ENCODE measurements at regions of chr12 and their contacts with region 1.

Region 1: DNA sequence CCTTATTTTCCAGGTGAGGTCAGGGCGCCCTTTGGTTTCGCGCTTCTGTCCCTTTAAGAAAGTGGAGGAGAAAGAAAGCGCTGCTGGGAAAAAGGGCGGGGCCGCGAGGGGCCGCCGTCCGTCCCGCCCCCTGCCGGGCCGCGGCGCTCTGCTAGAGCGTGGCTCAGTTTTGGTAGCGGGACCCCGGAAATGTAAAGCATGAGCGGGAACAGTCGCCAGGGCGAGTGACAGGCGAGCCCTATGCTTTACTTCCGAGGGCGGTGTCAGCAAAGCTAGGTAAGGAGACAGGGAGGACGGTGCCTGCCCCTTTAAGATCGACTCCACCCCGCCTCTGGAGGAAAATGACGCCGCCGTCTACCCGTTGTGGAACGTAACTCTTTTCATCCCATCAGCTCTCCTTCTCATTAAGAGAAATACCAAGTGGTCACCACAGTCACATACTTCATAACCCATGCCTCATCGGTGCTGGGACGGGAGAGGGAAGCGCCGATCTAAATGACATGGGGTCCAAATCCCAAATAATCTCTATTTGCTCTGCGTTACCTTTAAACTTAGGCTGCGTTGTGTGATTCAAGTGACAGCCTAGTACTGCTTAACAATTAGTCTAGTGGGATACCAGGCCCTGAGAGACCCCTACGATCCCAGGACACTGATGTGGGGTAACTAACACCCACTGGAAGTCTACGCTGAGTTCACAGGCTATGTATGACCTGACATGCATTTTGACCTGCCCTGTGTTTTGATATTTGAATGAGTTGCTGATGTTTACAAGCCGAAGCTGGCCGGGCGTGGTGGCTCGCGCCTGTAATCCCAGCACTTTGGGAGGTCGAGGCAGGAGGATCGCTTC is at the start of gene ETFBKMT:
- ATAC-seq: peak; percentile 89 to 99 (median 98)
- H3K4me3 ChIP-seq: peak within 1 kb of the TSS; percentile 50 to 76 (median 52)
- H3K27ac ChIP-seq: peak within 1 kb of the TSS; percentile 85 to 94
- H3K4me1 ChIP-seq: peaks cover 4 to 7% of the 10 kb centered on the region in 2 donors
- total RNA-seq, gene ETFBKMT: 1.6 to 2.9 (median 2.3) TPM

Region 2: GRCh38 chr12:30828686-30829085 is 830.6 kb before region 1 on chr12:
- in situ Hi-C with region 1: no loop called
- ATAC-seq: peak in 1 of 8 experiments; percentile 11
- H3K4me3 ChIP-seq: no peak overlapping the region
- H3K27ac ChIP-seq: no peak overlapping the region
- H3K4me1 ChIP-seq: no peaks in the 10 kb centered on the region

Region 3: DNA sequence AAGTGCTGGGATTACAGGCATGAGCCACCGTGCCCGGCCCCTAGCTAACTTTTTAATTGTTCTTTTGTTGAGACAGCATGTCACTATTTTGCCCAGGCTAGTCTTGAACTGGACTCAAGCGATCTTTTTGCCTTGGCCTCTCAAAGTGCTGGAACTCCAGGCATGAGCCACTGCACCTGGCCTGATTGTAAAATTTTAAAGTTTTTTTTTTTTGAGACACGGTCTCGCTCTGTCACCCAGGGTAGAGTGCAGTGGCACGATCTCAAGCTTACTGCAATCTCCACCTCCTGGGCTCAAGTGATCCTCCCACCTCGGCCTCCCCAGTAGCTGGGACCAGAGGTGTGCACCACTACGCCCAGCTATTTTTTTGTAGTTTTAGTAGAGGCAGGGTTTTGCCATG is 254.3 kb before region 1 on chr12:
- in situ Hi-C with region 1: no loop called
- ATAC-seq: no peak
- H3K4me3 ChIP-seq: no peak overlapping the region
- H3K27ac ChIP-seq: no peak overlapping the region
- H3K4me1 ChIP-seq: peaks cover 0 to 4% of the 10 kb centered on the region in 2 donors

Region 4: GRCh38 chr12:31756977-31757420 is 97.7 kb after region 1 on chr12:
- in situ Hi-C with region 1: no loop called
- ATAC-seq: peak in 5 of 8 experiments; percentile 18 to 98 (median 46)
- H3K4me3 ChIP-seq: no peak overlapping the region
- H3K27ac ChIP-seq: no peak overlapping the region
- H3K4me1 ChIP-seq: peaks cover 6 to 7% of the 10 kb centered on the region in 2 donors

Region 5: DNA sequence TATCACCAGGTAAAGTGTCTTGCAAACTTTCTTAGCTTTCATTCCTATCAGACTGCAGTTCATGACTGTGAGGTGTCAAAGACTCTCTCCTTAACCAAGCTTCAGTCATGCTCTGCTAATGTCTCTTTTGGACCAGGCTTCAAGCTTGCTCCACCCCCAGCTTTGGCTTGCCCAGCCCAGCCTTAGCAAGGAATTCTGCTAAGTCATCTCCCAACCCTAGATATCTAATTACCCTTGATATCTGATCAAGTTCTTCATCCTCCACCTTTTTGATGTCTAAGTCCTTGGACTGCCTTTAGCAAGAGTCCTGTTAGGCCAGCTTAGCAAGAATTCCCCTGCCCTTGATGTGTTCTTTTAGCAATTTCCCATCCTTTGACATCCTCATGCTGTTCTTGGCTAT is 631.1 kb after region 1 on chr12:
- in situ Hi-C with region 1: loop called in 1 of 9 experiments (anchors 25 kb)
- ATAC-seq: peak in 2 of 8 experiments; percentile 97 to 100
- H3K4me3 ChIP-seq: no peak overlapping the region
- H3K27ac ChIP-seq: no peak overlapping the region
- H3K4me1 ChIP-seq: peaks cover 4 to 18% of the 10 kb centered on the region in 2 donors

Region 6: GRCh38 chr12:32302218-32303173 is 643.2 kb after region 1 on chr12:
- in situ Hi-C with region 1: loop called in 4 of 9 experiments (anchors 25 kb)
- ATAC-seq: peak in 4 of 8 experiments; percentile 47 to 66 (median 56)
- H3K4me3 ChIP-seq: no peak overlapping the region
- H3K27ac ChIP-seq: no peak overlapping the region
- H3K4me1 ChIP-seq: no peaks in the 10 kb centered on the region

Region 7: DNA sequence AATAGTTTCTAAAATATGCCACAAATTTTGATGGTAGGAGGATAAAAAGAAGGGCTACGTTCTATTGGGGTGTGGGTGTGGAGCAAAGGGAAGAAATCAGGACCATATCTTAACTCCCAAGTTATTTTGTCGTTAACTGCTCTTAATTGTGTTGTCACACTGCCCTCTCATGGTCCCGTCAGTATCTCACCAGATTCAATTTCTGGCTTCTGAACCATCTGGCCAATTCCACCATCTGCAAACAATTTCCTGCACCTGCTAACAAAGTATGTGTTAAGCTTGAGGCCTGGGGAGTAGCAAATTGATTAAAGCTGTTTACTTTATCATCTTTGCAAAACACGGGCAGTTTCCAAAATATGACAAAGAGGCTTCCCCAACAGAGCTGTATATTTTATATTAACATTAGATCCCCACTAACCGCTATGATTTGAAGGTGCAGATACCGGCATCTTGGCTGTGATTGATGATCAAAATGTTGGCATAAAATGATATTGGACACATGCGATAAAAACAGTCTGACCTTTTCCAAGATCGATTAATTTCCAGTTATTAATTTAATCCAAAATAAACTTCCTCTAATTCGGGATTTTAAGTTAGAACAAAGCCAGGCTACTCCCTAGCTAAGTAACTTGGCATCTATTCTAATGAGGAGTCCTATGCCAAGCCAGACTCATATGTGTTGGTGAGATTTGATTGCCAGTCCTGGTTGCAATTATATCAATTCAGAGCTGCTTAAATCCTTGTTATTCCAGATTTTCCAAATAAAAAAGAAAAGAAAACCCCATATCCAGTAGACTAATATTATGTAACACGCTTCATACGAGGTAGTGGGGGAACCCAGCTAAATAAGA is 1012.8 kb after region 1 on chr12:
- in situ Hi-C with region 1: loop called in 2 of 9 experiments (anchors 25 kb)
- ATAC-seq: peak; percentile 49 to 97 (median 66)
- H3K4me3 ChIP-seq: no peak overlapping the region
- H3K27ac ChIP-seq: no peak overlapping the region
- H3K4me1 ChIP-seq: no peaks in the 10 kb centered on the region

Region 8: DNA sequence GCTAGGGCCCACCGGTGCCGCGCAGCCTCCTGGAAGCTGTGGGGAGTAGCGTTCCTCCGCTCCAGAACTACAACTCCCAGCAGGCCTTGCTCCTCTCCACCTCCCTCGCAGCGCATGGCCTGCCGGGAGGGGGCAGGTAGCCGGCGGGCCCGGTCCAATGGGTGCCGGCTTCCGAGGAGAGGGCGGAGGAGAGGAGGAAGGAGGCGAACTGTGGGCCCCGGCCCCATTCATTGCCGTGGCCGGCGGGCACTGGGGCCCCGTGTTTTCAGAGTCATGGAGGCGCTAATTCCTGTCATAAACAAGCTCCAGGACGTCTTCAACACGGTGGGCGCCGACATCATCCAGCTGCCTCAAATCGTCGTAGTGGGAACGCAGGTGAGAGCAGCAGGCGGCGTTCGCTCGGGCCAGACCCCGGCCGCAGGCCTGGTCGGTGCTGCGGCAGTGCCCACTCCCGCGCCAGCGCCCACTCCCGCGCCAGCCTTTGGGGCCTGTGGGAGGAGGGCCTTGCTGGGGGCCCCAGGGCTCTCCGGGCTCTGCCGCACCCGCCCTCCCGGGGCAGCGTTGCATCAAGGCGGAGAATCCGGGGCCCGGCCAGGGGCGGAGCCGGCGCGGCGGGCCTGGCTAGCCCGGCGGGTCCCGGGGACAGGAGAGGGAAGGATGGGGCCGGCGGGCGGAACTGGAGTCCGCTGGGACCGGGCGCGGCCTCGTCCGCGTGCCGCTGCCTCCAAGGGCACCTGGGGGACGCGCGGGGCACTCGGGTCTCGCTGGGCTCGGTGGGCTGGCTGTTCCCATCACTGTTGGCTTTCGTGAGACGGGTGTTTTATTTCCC is 1020.0 kb after region 1 on chr12 and contains the start of gene DNM1L:
- in situ Hi-C with region 1: loop called in 2 of 9 experiments (anchors 25 kb)
- ATAC-seq: peak; percentile 92 to 96 (median 94)
- H3K4me3 ChIP-seq: peak within 1 kb of the TSS; percentile 54 to 74 (median 63)
- H3K27ac ChIP-seq: peak within 1 kb of the TSS; percentile 85 to 87
- H3K4me1 ChIP-seq: peaks cover 0 to 10% of the 10 kb centered on the region in 2 donors
- total RNA-seq, gene DNM1L: 38.7 to 103 (median 62.3) TPM

Measured in motor neuron (in vitro differentiated cells).